Breast epithelium (tissue), 4 donors: ENCODE measurements at regions of chr3 and their contacts with region 1.

Region 1: DNA sequence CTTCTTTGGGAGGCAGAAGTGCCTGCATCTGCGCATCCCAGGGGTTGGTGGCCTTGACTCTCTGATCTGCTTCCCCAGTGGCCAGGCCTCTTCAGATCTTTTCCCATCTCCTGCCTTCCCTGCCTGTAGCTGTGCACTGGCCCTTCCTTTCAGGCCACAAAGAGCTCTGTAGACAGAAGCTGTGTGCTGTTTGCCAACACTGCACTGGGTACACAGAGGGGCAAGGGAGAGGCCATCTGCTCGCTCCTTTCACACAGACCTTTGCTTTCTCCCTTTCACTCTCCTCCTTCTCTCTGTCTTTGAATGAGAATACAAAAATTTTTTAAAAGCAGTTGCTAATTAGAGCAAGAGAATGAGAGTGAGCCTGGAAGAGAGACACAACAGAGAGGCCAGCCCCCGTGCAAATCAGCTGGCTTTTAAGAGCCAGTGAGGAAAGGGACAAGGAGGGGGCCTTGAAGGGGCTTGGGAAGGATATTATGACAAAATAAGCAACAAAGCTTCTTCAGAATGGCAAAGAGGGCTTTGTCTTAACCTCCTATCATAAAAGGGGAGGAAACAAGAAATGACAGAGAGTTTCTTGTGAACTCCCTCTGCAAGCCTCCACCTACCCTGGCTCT is 170.9 kb downstream of the EPHB1 start:
- DNase-seq: no peak
- H3K4me3 ChIP-seq: no peak overlapping the region
- H3K27ac ChIP-seq: no peak overlapping the region
- H3K4me1 ChIP-seq: no peaks in the 10 kb centered on the region
- H3K27me3 ChIP-seq: no peaks in the 10 kb centered on the region
- CTCF ChIP-seq: no peak
- POLR2A ChIP-seq: no peak

Region 2: DNA sequence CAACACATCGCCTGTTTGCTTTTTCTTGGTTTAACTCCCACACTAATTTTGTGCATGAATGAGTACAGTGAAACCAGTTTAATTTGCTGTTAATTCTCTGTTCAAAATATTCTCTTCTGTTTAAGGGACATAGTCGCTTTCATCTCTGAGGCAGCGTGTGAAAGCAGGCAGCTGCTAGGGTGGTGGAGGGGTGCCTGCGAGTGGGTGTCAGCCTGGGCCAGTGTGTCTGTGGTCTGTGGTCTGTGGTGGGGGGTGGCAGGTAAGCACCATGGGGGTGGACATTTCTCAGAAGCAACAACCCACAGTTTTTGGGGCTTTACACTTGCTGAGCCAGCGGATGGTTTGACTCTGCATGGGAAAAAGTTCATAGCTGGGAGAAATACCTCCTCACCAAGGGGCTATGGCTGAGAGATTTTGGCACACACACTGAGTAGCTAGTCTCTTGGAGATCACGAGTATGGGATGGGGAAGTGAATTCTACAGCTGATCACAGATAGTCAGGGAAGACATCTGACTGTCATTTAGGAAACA is 61.7 kb before region 1 on chr3:
- intact Hi-C with region 1: no loop called
- DNase-seq: no peak
- H3K4me3 ChIP-seq: no peak overlapping the region
- H3K27ac ChIP-seq: no peak overlapping the region
- H3K4me1 ChIP-seq: no peaks in the 10 kb centered on the region
- H3K27me3 ChIP-seq: no peaks in the 10 kb centered on the region
- CTCF ChIP-seq: no peak
- POLR2A ChIP-seq: no peak

Region 3: GRCh38 chr3:134937256-134938028 is 28.5 kb before region 1 on chr3:
- intact Hi-C with region 1: loop called (anchors 1 kb)
- DNase-seq: no peak
- H3K4me3 ChIP-seq: no peak overlapping the region
- H3K27ac ChIP-seq: no peak overlapping the region
- H3K4me1 ChIP-seq: no peaks in the 10 kb centered on the region
- H3K27me3 ChIP-seq: no peaks in the 10 kb centered on the region
- CTCF ChIP-seq: no peak
- POLR2A ChIP-seq: no peak